HepG2 (cell line): ENCODE measurements at regions of chr4 and their contacts with region 1.

Region 1: GRCh38 chr4:56544573-56545131 is 39.1 kb downstream of the ARL9 start:
- DNase-seq: peak; percentile 78
- ATAC-seq: peak; percentile 99
- H3K4me3 ChIP-seq: peak overlapping the region; percentile 35 to 67 (median 39)
- H3K27ac ChIP-seq: no peak overlapping the region
- H3K4me1 ChIP-seq: 0 out of 2 replicates have a peak, but pooled peaks cover 11% of the 10 kb centered on the region
- H3K27me3 ChIP-seq: 0 out of 5 replicates have a peak, but pooled peaks cover 0 to 4% of the 10 kb centered on the region in 2 experiments
- CTCF ChIP-seq: peak; percentile 98
- EP300 ChIP-seq: 0 out of 4 replicates have a peak, but pooled peaks of 1 of the 2 experiments have one; percentile 13
- POLR2A ChIP-seq: no peak
- RAD21 ChIP-seq: peak; percentile 91

Region 2: DNA sequence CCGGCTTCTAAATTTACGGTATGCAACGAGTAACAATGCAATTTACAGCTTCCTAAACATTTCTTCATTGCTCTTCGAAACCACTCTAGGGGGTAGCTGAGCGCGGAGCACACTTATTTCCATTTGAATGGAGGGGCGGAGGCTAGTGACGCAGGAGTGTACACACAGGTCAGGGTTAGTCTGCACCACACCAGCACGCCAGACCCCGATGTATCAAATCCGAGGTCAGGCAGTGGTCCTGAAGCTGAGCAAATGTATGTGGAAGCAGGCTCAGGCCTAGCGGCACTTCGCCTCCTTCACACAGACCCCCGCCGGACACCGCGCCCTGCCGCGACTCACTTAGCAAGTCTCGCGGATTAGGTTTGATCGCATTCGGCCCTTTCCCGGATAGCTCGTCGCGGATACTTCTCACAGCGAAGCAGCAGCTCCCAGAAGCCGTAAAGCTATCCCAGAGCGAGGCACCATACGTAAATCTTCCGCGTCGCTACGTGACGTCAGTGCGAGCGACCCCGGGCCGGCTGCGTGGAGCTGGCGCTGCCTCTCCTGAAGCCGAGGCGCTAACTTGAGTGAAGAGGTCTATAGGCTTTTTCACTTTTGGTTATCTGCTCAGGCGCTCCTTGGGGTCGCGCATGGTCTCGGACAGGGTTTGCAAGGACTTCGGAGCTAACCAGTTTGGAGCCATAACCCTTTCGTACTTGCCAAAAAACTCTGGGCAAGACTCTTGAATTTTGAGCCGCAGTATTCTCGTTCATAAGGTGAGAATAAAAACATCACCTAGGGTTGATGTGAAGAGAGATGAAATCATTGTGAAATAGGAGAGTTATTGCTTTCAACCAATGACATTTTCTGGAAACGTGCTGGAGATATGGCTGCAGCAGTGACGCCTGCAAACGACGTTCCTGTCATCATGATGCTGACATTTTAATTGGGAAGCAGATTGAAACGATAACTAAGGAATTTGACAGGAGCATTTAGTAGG is 157.3 kb before region 1 on chr4 and contains the start of gene AASDH:
- CTCF ChIA-PET with region 1: no interaction called
- POLR2A ChIA-PET with region 1: interaction called, 3 read pairs
- in situ Hi-C with region 1: no loop called
- intact Hi-C with region 1: loop called (anchors 1 kb)
- DNase-seq: peak; percentile 88
- ATAC-seq: peak; percentile 92
- H3K4me3 ChIP-seq: peak within 1 kb of the TSS; percentile 71 to 87 (median 85)
- H3K27ac ChIP-seq: peak within 1 kb of the TSS; percentile 97
- H3K4me1 ChIP-seq: peaks cover 28% of the 10 kb centered on the region
- H3K27me3 ChIP-seq: no peaks in the 10 kb centered on the region; a peak in 1 of 5 replicates
- CTCF ChIP-seq: 0 out of 2 replicates have a peak, but pooled peaks have one; percentile 11
- EP300 ChIP-seq: 0 out of 4 replicates have a peak, but pooled peaks of 1 of the 2 experiments have one; percentile 16
- POLR2A ChIP-seq: peak; percentile 91 to 96
- RAD21 ChIP-seq: peak; percentile 27; the same call in 1 of the 2 replicates
- total RNA-seq, gene AASDH: 12.6 and 16.8 TPM in 2 replicates

Region 3: GRCh38 chr4:56424697-56425514 is 119.7 kb before region 1 on chr4:
- CTCF ChIA-PET with region 1: interaction called, 12 read pairs
- POLR2A ChIA-PET with region 1: no interaction called
- in situ Hi-C with region 1: no loop called
- intact Hi-C with region 1: loop called (anchors 2 kb)
- DNase-seq: no peak
- ATAC-seq: no peak
- H3K4me3 ChIP-seq: no peak overlapping the region
- H3K27ac ChIP-seq: no peak overlapping the region
- H3K4me1 ChIP-seq: peaks cover 26% of the 10 kb centered on the region
- H3K27me3 ChIP-seq: no peaks in the 10 kb centered on the region
- CTCF ChIP-seq: peak; percentile 44
- EP300 ChIP-seq: no peak
- POLR2A ChIP-seq: no peak
- RAD21 ChIP-seq: no peak

Region 4: GRCh38 chr4:56799824-56800756 is 255.4 kb after region 1 on chr4:
- CTCF ChIA-PET with region 1: interaction called, 5 read pairs
- POLR2A ChIA-PET with region 1: no interaction called
- in situ Hi-C with region 1: no loop called
- intact Hi-C with region 1: loop called (anchors 1 kb)
- DNase-seq: peak; percentile 61
- ATAC-seq: peak; percentile 99
- H3K4me3 ChIP-seq: peak overlapping the region; percentile 64 to 68 (median 66)
- H3K27ac ChIP-seq: no peak overlapping the region
- H3K4me1 ChIP-seq: no peaks in the 10 kb centered on the region
- H3K27me3 ChIP-seq: no peaks in the 10 kb centered on the region; a peak in 1 of 5 replicates
- CTCF ChIP-seq: peak; percentile 93
- EP300 ChIP-seq: no peak
- POLR2A ChIP-seq: no peak
- RAD21 ChIP-seq: peak; percentile 80

Region 5: GRCh38 chr4:56821381-56822243 is 277.0 kb after region 1 on chr4 and contains the start of gene SPINK2:
- CTCF ChIA-PET with region 1: no interaction called
- POLR2A ChIA-PET with region 1: no interaction called
- in situ Hi-C with region 1: no loop called
- intact Hi-C with region 1: no loop called
- DNase-seq: no peak
- ATAC-seq: peak; percentile 98
- H3K4me3 ChIP-seq: peak within 1 kb of the TSS in 2 of 3 experiments; percentile 22 to 61; a peak in 2 of 6 replicates
- H3K27ac ChIP-seq: no peak within 1 kb of the TSS
- H3K4me1 ChIP-seq: no peaks in the 10 kb centered on the region
- H3K27me3 ChIP-seq: peaks cover 5 to 37% of the 10 kb centered on the region in 2 experiments; a peak in 4 of 5 replicates
- CTCF ChIP-seq: peak; percentile 46
- EP300 ChIP-seq: no peak
- POLR2A ChIP-seq: no peak
- RAD21 ChIP-seq: no peak
- total RNA-seq, gene SPINK2: not detected in 2 replicates